Mucosa of descending colon (tissue), 3 donors: ENCODE measurements at regions of chr5 and their contacts with region 1.

Region 1: GRCh38 chr5:81506900-81507588 is 113.1 kb upstream of the ACOT12 start:
- DNase-seq: peak in 1 of 3 donors; percentile 67
- ATAC-seq: peak; percentile 93
- H3K4me3 ChIP-seq: no peak overlapping the region
- H3K4me1 ChIP-seq: no peaks in the 10 kb centered on the region
- CTCF ChIP-seq: peak; percentile 55

Region 2: DNA sequence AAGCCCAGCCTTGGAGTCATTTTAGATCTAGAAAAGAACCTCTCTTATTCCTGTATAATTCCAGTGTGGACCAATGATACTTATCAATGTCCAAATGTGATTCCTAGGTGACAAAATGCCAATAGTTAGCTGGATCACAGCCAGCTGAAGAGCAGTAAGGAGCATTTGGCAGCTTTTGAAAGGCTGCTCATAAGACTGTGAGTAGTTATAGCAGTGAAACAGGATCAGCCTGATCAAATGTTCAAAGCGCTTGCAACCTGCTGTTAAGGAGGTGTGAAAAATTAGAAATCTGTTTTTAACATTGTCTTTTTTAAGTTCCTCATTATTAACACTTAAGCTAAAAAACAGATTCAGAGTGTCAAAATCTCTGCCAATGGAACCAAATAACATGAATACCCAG is 158.8 kb after region 1 on chr5:
- intact Hi-C with region 1: no loop called
- DNase-seq: no peak
- ATAC-seq: no peak
- H3K4me3 ChIP-seq: no peak overlapping the region
- H3K4me1 ChIP-seq: no peaks in the 10 kb centered on the region
- CTCF ChIP-seq: no peak

Region 3: DNA sequence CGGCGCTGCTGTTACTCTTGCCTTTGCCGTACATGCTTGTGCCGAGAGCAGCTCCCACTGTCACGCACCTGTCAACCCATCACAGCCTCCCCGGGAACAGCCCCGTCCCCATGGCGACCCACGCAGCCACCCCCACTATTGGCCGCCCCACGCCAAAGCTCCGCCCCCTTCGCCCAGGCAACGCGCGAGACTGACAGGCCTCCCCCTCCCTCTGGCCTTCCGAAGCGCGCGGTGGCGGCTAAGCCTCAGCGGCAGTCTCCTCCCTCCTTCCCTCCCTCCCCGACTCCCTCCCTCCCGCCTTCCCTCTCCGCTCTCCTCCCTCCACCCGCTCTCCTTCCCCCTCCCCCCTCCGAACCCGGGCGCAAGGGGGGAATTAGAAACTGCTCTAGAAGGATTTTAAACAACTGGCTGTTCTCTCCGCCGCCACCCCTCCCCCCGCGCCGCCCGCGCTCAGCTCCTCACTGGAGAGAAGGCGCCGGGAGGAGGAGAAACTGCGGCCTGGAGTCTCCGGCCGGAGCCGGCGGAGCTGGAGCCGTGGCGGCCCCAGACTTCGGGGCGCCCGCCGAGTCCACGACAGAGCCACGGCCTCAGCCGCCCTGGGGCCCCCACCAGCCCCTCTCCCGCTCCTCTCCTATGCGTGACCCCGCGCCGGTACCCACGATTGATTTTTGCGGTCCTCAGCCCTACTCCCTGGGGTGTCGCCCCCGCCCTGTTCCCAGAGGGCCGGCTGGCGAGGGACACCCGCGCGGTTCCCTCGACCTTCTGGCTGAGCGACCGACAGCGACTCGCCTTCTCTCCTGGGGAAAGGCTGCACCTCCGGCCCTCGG is 244.2 kb after region 1 on chr5 and contains the start of gene SSBP2:
- intact Hi-C with region 1: loop called (anchors 10 kb)
- DNase-seq: peak; percentile 99 to 100 (median 100)
- ATAC-seq: peak; percentile 94
- H3K4me3 ChIP-seq: peak within 1 kb of the TSS; percentile 51
- H3K4me1 ChIP-seq: peaks cover 11% of the 10 kb centered on the region
- CTCF ChIP-seq: no peak
- total RNA-seq, gene SSBP2: 17.5 to 77.9 (median 20.9) TPM